CD8-positive, alpha-beta T cell (primary cell): ENCODE measurements at regions of chr12 and their contacts with region 1.

Region 1: GRCh38 chr12:62259993-62260732 is at the start of gene USP15:
- DNase-seq: peak; percentile 93 to 98 (median 96)
- ATAC-seq: peak; percentile 76
- H3K4me3 ChIP-seq: peak within 1 kb of the TSS; percentile 78 to 92
- H3K4me3 Mint-ChIP-seq: peak within 1 kb of the TSS; percentile 95
- H3K27ac ChIP-seq: peak within 1 kb of the TSS; percentile 92 to 97
- H3K27ac Mint-ChIP-seq: peak within 1 kb of the TSS; percentile 99
- H3K4me1 ChIP-seq: peaks cover 58% of the 10 kb centered on the region
- H3K4me1 Mint-ChIP-seq: peaks cover 64% of the 10 kb centered on the region
- H3K27me3 ChIP-seq: no peaks in the 10 kb centered on the region
- H3K27me3 Mint-ChIP-seq: no peaks in the 10 kb centered on the region
- CTCF ChIP-seq: peak; percentile 16
- total RNA-seq, gene USP15: 213 to 224 TPM

Region 2: GRCh38 chr12:62248873-62249272 is 11.3 kb before region 1 on chr12:
- CTCF ChIA-PET with region 1: interaction called, 6 read pairs
- POLR2A ChIA-PET with region 1: interaction called, 14 read pairs
- intact Hi-C with region 1: no loop called
- DNase-seq: no peak
- ATAC-seq: no peak
- H3K4me3 ChIP-seq: no peak overlapping the region
- H3K4me3 Mint-ChIP-seq: no peak overlapping the region
- H3K27ac ChIP-seq: no peak overlapping the region
- H3K27ac Mint-ChIP-seq: no peak overlapping the region
- H3K4me1 ChIP-seq: peaks cover 17% of the 10 kb centered on the region
- H3K4me1 Mint-ChIP-seq: peaks cover 17% of the 10 kb centered on the region
- H3K27me3 ChIP-seq: no peaks in the 10 kb centered on the region
- H3K27me3 Mint-ChIP-seq: no peaks in the 10 kb centered on the region
- CTCF ChIP-seq: no peak

Region 3: GRCh38 chr12:62319058-62319457 is 58.9 kb after region 1 on chr12:
- CTCF ChIA-PET with region 1: no interaction called
- POLR2A ChIA-PET with region 1: interaction called, 4 read pairs
- intact Hi-C with region 1: loop called in 1 of 2 experiments (anchors 5 kb)
- DNase-seq: no peak
- ATAC-seq: no peak
- H3K4me3 ChIP-seq: no peak overlapping the region
- H3K4me3 Mint-ChIP-seq: no peak overlapping the region
- H3K27ac ChIP-seq: no peak overlapping the region
- H3K27ac Mint-ChIP-seq: peak overlapping the region; percentile 16
- H3K4me1 ChIP-seq: no peaks in the 10 kb centered on the region
- H3K4me1 Mint-ChIP-seq: peaks cover 41% of the 10 kb centered on the region
- H3K27me3 ChIP-seq: no peaks in the 10 kb centered on the region
- H3K27me3 Mint-ChIP-seq: no peaks in the 10 kb centered on the region
- CTCF ChIP-seq: no peak

Region 4: DNA sequence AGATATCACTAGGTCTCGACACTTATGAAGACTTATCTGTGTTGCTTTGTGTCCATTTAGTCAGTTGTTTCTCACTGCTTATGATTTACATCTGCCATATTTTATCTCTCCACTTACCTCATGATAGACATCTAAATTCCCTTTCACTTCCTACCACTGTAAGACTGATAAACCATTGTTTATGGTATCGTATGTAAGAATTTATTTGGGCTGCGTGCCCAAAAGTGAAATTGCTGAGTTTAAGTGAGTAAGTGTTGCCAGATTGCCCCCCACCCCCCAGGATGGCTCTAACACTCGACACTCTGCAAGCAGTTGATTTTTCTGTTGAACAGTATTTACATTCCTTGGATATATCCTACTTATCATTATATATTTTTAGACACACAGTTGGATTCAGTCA is 136.6 kb after region 1 on chr12:
- CTCF ChIA-PET with region 1: no interaction called
- POLR2A ChIA-PET with region 1: no interaction called
- intact Hi-C with region 1: loop called in 1 of 2 experiments (anchors 5 kb)
- DNase-seq: no peak
- ATAC-seq: no peak
- H3K4me3 ChIP-seq: no peak overlapping the region
- H3K4me3 Mint-ChIP-seq: no peak overlapping the region
- H3K27ac ChIP-seq: no peak overlapping the region
- H3K27ac Mint-ChIP-seq: peak overlapping the region; percentile 41
- H3K4me1 ChIP-seq: no peaks in the 10 kb centered on the region
- H3K4me1 Mint-ChIP-seq: peaks cover 2% of the 10 kb centered on the region
- H3K27me3 ChIP-seq: no peaks in the 10 kb centered on the region
- H3K27me3 Mint-ChIP-seq: no peaks in the 10 kb centered on the region
- CTCF ChIP-seq: no peak

Region 5: GRCh38 chr12:63779498-63780481 is 1519.6 kb after region 1 on chr12 and contains the start of gene RXYLT1:
- CTCF ChIA-PET with region 1: no interaction called
- POLR2A ChIA-PET with region 1: no interaction called
- intact Hi-C with region 1: loop called in 1 of 2 experiments (anchors 2 kb)
- DNase-seq: peak; percentile 66 to 93 (median 83)
- ATAC-seq: peak; percentile 93
- H3K4me3 ChIP-seq: peak within 1 kb of the TSS; percentile 76 to 79
- H3K4me3 Mint-ChIP-seq: peak within 1 kb of the TSS; percentile 96
- H3K27ac ChIP-seq: peak within 1 kb of the TSS; percentile 74 to 87
- H3K27ac Mint-ChIP-seq: peak within 1 kb of the TSS; percentile 96
- H3K4me1 ChIP-seq: peaks cover 8% of the 10 kb centered on the region
- H3K4me1 Mint-ChIP-seq: peaks cover 32% of the 10 kb centered on the region
- H3K27me3 ChIP-seq: no peaks in the 10 kb centered on the region
- H3K27me3 Mint-ChIP-seq: no peaks in the 10 kb centered on the region
- CTCF ChIP-seq: no peak
- total RNA-seq, gene RXYLT1: 5.5 to 5.8 TPM